ENCODE measurements at regions of chr12 and their contacts with region 1.

Region 1: GRCh38 chr12:90854136-90854689 is 100.8 kb downstream of the CCER1 start:
- DNase-seq: no peak
- ATAC-seq: peak; percentile 68

Region 2: DNA sequence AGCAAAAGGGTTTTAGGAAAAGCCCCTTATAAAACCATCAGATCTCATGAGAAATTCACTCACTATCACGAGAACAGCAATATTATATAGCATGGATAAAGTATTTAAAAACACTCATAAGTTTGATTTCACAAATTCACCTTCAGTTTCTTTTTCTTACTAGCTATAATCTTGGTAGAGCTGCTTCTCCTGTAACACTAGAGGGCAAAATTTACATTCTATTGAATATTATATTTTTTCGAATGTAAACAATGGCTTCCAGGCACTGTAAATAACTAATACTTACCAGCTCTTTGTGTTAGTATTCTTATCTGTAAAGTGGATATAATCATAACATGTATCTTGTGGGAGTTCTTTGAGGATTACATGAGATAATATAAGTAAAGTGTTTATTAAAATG is 158.8 kb before region 1 on chr12:
- intact Hi-C with region 1: loop called (anchors 10 kb)
- DNase-seq: no peak
- ATAC-seq: no peak

Region 3: DNA sequence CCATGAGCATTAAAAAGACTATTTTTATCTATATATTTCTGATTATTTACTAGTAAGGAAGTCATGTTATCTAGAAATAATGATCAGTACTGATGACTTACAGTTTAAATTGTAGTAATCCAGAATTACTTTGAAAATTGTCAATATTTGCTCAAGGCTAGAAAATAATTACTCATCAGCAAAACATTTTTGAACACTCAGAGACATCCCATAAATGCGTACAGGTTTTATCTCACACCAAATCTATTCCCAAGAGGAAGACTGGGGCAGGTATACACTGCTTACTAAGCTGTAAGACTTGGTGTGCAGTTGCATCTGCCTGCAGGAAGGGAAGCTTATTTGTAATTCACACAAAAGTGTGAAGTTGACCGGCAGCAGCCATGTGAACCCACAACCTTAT is 45.7 kb before region 1 on chr12:
- intact Hi-C with region 1: no loop called
- DNase-seq: no peak
- ATAC-seq: no peak

Measured in Right ventricle myocardium superior (tissue), 1 donor.